PC-9 (cell line): ENCODE measurements at regions of chr6 and their contacts with region 1.

Region 1: GRCh38 chr6:144195679-144196270 is 45.5 kb downstream of the STX11 start:
- DNase-seq: peak; percentile 25 to 95
- H3K4me3 ChIP-seq: no peak overlapping the region
- H3K27ac ChIP-seq: no peak overlapping the region
- H3K4me1 ChIP-seq: peaks cover 13% of the 10 kb centered on the region; the same call in 1 of the 2 replicates
- H3K27me3 ChIP-seq: no peaks in the 10 kb centered on the region
- CTCF ChIP-seq: no peak

Region 2: DNA sequence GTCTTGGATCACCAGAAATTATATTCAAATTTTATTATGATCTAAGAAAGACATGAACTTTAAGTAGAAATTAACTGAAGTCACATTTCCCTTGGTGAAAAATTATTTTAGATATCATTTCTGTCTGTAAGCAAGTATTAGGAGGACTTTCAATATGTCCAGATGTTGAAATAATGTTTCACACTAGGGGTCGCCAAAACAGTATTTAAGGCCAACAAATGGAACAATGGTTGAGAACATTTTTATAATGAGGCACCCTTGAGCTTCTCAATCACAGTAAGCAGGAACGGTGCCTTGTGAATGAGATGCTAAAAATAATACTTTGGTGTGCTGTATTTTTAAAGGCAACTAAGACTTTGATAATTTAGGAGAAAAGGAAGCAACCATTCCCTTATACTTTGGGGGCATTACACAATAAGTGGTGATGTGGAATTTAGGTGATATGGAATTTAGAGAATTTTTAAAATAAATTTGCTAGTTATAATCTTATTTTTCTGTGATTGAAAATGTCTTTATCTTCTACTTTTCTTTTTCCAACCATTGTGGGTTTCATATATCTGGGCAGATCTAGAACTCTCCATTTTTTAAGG is 90.8 kb before region 1 on chr6:
- CTCF ChIA-PET with region 1: no interaction called
- POLR2A ChIA-PET with region 1: no interaction called
- intact Hi-C with region 1: loop called (anchors 5 kb)
- DNase-seq: peak; percentile 19 to 50
- H3K4me3 ChIP-seq: no peak overlapping the region
- H3K27ac ChIP-seq: no peak overlapping the region
- H3K4me1 ChIP-seq: no peaks in the 10 kb centered on the region
- H3K27me3 ChIP-seq: no peaks in the 10 kb centered on the region
- CTCF ChIP-seq: peak; percentile 84

Region 3: GRCh38 chr6:144158133-144158532 is 37.6 kb before region 1 on chr6:
- CTCF ChIA-PET with region 1: no interaction called
- POLR2A ChIA-PET with region 1: no interaction called
- intact Hi-C with region 1: loop called (anchors 2 kb)
- DNase-seq: peak; percentile 59 to 72
- H3K4me3 ChIP-seq: no peak overlapping the region
- H3K27ac ChIP-seq: no peak overlapping the region
- H3K4me1 ChIP-seq: 0 out of 2 replicates have a peak, but pooled peaks cover 5% of the 10 kb centered on the region
- H3K27me3 ChIP-seq: no peaks in the 10 kb centered on the region
- CTCF ChIP-seq: no peak